ENCODE measurements at regions of chr17 and their contacts with region 1.

Region 1: DNA sequence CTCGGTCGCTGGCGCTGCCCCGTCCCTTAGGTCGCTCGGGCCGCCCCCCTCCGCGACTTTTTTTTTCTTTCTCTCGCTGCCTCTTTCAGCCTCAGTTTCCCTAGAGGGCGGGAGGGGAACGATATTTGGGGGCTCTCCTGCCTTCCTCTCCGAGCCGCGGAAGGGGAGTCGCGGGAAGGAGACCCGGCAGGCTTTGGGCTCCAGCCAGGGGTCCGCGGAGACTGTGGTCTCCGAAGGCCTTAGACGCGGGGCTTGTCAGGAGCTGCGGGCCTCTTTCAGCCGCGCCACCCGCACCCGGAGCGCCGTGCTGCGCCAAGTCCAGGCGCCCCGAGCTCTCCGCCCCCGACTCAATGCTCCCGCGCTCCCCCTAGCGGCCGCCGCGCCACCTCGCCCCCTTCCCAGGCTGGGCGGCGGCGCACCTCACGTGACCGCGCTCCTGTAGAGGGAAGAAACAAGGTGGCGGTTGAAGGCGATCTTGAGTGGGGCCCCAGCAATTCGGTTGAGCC is at the start of gene LRRC37B:
- DNase-seq: peak; percentile 89
- ATAC-seq: peak; percentile 87
- H3K4me3 Mint-ChIP-seq: peak within 1 kb of the TSS; percentile 83
- H3K27ac Mint-ChIP-seq: peak within 1 kb of the TSS; percentile 82
- H3K4me1 Mint-ChIP-seq: peaks cover 30% of the 10 kb centered on the region
- H3K27me3 Mint-ChIP-seq: no peaks in the 10 kb centered on the region
- CTCF ChIP-seq: peak; percentile 96
- total RNA-seq, gene LRRC37B: 15.5 to 17.3 TPM

Region 2: DNA sequence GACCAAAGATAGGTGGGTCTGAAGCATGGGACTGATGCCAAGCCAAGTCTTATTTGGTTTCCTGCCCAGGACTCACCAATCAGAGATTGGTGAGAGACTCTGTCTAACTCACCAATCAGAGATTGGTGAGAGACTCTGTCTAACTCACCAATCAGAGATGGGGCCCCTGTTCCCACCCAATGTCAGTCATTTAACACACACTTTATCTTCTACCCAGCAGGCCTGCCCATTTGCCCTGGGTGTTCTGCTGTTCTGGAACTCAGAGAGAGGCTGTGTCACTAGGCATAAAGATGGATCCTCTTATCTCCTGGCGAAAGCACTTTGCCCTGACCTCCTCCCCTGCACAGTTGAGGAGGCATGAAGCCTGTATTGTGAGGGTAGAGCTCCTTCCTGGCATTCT is 129.8 kb after region 1 on chr17:
- CTCF ChIA-PET with region 1: interaction called, 49 read pairs
- POLR2A ChIA-PET with region 1: interaction called, 4 read pairs
- intact Hi-C with region 1: loop called (anchors 5 kb)
- DNase-seq: peak; percentile 42
- ATAC-seq: peak; percentile 71
- H3K4me3 Mint-ChIP-seq: no peak overlapping the region
- H3K27ac Mint-ChIP-seq: no peak overlapping the region
- H3K4me1 Mint-ChIP-seq: peaks cover 18% of the 10 kb centered on the region
- H3K27me3 Mint-ChIP-seq: no peaks in the 10 kb centered on the region
- CTCF ChIP-seq: no peak

Region 3: GRCh38 chr17:32142038-32142856 is 135.2 kb after region 1 on chr17 and contains the start of gene RHOT1:
- CTCF ChIA-PET with region 1: interaction called, 49 read pairs
- POLR2A ChIA-PET with region 1: interaction called, 4 read pairs
- intact Hi-C with region 1: loop called (anchors 5 kb)
- DNase-seq: peak; percentile 71
- ATAC-seq: peak; percentile 84
- H3K4me3 Mint-ChIP-seq: peak within 1 kb of the TSS; percentile 90
- H3K27ac Mint-ChIP-seq: peak within 1 kb of the TSS; percentile 88
- H3K4me1 Mint-ChIP-seq: peaks cover 29% of the 10 kb centered on the region
- H3K27me3 Mint-ChIP-seq: no peaks in the 10 kb centered on the region
- CTCF ChIP-seq: peak; percentile 54
- total RNA-seq, gene RHOT1: 25.8 to 27.2 TPM